ENCODE measurements at regions of chr19 and their contacts with region 1.

Region 1: GRCh38 chr19:38849860-38850435 is at the start of gene HNRNPL:
- DNase-seq: peak; percentile 99
- H3K4me3 Mint-ChIP-seq: peak within 1 kb of the TSS; percentile 92
- H3K27ac Mint-ChIP-seq: peak within 1 kb of the TSS; percentile 99
- H3K4me1 Mint-ChIP-seq: peaks cover 58% of the 10 kb centered on the region
- H3K27me3 Mint-ChIP-seq: no peaks in the 10 kb centered on the region
- total RNA-seq, gene HNRNPL: 457 to 464 TPM

Region 2: DNA sequence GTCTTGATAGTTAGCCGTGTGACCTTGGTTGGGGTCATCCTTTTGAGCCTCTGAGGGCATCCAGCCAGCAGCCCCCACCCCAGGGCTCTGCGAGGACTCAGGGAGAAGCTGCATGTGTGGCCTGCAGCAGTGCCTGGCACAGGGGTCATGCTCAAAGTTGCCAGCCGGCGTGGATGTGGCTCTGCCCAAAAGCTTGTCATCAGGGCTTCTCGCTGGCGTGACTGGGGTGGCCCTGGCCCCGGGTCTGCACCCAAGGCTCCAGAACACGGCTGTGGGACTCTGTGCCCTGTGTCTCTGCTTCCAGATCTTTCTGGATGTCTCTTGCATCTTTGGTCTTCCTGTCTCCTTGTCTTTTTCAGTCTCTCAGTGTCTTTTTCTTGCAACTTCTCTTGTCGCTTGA is 325.6 kb before region 1 on chr19:
- CTCF ChIA-PET with region 1: no interaction called
- POLR2A ChIA-PET with region 1: no interaction called
- DNase-seq: no peak
- H3K4me3 Mint-ChIP-seq: no peak overlapping the region
- H3K27ac Mint-ChIP-seq: no peak overlapping the region
- H3K4me1 Mint-ChIP-seq: no peaks in the 10 kb centered on the region
- H3K27me3 Mint-ChIP-seq: peaks cover 2% of the 10 kb centered on the region

Region 3: DNA sequence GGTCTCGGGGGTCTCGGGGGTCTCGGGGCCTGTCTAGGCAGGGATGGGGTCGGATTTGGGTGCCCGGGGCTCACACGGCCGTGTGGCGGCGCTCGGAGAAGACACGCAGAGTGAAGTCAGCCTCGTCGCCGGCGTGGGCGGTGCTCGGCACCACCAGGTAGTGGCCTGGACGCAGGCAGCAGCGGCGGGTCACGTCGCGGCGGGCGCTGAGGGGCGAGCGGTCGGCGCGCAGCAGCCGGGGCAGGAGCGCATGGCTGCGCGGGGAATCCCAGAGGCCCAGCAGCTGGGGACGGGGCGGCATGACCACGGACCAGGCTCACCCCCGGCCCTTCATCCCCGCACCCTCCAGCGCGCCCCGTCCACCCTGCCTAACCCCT is 113.9 kb before region 1 on chr19:
- CTCF ChIA-PET with region 1: no interaction called
- POLR2A ChIA-PET with region 1: interaction called, 10 read pairs
- DNase-seq: peak; percentile 65
- H3K4me3 Mint-ChIP-seq: peak overlapping the region; percentile 63
- H3K27ac Mint-ChIP-seq: no peak overlapping the region
- H3K4me1 Mint-ChIP-seq: peaks cover 62% of the 10 kb centered on the region
- H3K27me3 Mint-ChIP-seq: peaks cover 4% of the 10 kb centered on the region

Region 4: DNA sequence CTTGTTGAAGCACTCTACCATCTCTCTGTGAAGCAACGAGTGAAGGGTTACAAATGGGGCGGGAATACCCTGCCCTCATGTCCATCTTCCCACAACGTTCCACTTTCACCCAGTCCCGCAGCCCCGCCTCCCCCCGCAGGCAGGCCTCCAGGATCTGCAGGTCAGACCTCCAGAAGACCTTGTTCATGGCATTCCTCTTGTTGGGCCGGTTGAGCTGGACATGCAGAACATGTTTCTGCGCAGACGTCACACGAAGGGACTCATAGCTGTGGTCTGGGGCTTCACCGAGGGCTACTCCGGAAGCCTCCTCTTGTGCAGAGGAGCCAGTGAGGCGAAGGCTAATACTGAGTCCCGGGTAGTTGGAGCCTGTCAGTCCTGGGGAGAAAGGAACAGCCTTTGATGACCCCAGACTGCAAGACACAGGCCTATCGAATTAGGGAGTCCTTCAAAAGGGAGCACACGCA is 18.8 kb before region 1 on chr19:
- CTCF ChIA-PET with region 1: interaction called, 11 read pairs
- POLR2A ChIA-PET with region 1: interaction called, 15 read pairs
- DNase-seq: no peak
- H3K4me3 Mint-ChIP-seq: peak overlapping the region; percentile 85
- H3K27ac Mint-ChIP-seq: peak overlapping the region; percentile 80
- H3K4me1 Mint-ChIP-seq: peaks cover 34% of the 10 kb centered on the region
- H3K27me3 Mint-ChIP-seq: no peaks in the 10 kb centered on the region

Region 5: GRCh38 chr19:38838573-38839269 is 11.2 kb before region 1 on chr19:
- CTCF ChIA-PET with region 1: interaction called, 3 read pairs
- POLR2A ChIA-PET with region 1: interaction called, 37 read pairs
- DNase-seq: peak; percentile 32
- H3K4me3 Mint-ChIP-seq: no peak overlapping the region
- H3K27ac Mint-ChIP-seq: peak overlapping the region; percentile 61
- H3K4me1 Mint-ChIP-seq: peaks cover 51% of the 10 kb centered on the region
- H3K27me3 Mint-ChIP-seq: no peaks in the 10 kb centered on the region

Region 6: GRCh38 chr19:38862321-38863059 is 12.5 kb after region 1 on chr19:
- CTCF ChIA-PET with region 1: interaction called, 16 read pairs
- POLR2A ChIA-PET with region 1: interaction called, 146 read pairs
- DNase-seq: no peak
- H3K4me3 Mint-ChIP-seq: no peak overlapping the region
- H3K27ac Mint-ChIP-seq: no peak overlapping the region
- H3K4me1 Mint-ChIP-seq: peaks cover 52% of the 10 kb centered on the region
- H3K27me3 Mint-ChIP-seq: no peaks in the 10 kb centered on the region

Region 7: GRCh38 chr19:38869856-38870607 is 20.1 kb after region 1 on chr19:
- CTCF ChIA-PET with region 1: interaction called, 16 read pairs
- POLR2A ChIA-PET with region 1: interaction called, 146 read pairs
- DNase-seq: peak; percentile 94
- H3K4me3 Mint-ChIP-seq: peak overlapping the region; percentile 76
- H3K27ac Mint-ChIP-seq: peak overlapping the region; percentile 78
- H3K4me1 Mint-ChIP-seq: peaks cover 55% of the 10 kb centered on the region
- H3K27me3 Mint-ChIP-seq: no peaks in the 10 kb centered on the region

Measured in activated CD4-positive, alpha-beta memory T cell treated with anti-CD3 and anti-CD28 coated beads, Interleukin-2, amount 10 ng/mL, durations not matched to agents 7 days and 5 days (primary cell).